Activated T-helper 2 cell treated with anti-CD3 and anti-CD28 coated beads, Interferon-gamma antibody, Interleukin-2, Interleukin-4, amounts not matched to agents 10 μg/mL and 5 μg/mL and 100 μg/mL, durations not matched to agents 14 hours and 24 hours and 36 hours (primary cell): ENCODE measurements at regions of chr1 and their contacts with region 1.

Region 1: DNA sequence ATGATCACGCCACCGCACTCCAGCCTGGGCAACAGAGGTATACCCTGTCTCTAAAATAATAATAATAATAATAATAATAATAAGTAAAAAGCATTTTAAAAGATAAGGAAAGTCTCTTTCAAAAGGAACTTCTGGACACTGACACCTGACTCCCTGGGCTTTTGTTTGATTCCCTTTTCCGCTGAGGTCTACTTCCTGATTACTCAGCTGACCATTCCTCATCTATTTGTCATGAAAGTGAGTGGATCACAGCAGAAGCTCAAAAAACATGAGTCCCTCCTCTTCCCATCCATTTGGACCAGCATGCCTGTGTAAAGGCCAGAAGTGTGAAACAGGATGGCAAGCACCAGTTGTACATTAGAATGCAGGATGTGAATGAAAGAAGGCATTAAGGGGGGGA is 61.1 kb upstream of the FBXO28 start:
- DNase-seq: no peak
- H3K4me3 Mint-ChIP-seq: no peak overlapping the region
- H3K27ac Mint-ChIP-seq: no peak overlapping the region
- H3K4me1 Mint-ChIP-seq: peaks cover 1% of the 10 kb centered on the region
- H3K27me3 Mint-ChIP-seq: peaks cover 23% of the 10 kb centered on the region

Region 2: DNA sequence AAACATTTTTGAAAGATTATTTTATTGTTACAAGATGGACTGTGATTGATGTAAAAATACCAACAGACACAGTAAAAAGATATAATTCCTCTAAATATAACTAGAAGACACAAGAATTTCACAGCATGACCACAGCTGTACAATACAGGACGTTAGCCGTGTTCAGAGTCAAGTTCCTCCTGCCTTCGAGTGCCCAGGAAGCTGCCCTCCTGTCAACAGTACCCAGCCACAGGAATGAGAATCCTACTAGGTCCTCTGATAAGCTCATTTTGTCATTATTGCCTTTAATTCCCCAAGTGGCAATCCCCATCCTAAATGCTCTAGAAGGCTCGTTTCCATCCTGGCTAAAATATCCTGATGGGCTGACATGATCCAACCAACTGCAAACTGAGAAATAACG is 356.8 kb before region 1 on chr1:
- intact Hi-C with region 1: loop called (anchors 5 kb)
- DNase-seq: no peak
- H3K4me3 Mint-ChIP-seq: no peak overlapping the region
- H3K27ac Mint-ChIP-seq: no peak overlapping the region
- H3K4me1 Mint-ChIP-seq: peaks cover 16% of the 10 kb centered on the region
- H3K27me3 Mint-ChIP-seq: peaks cover 2% of the 10 kb centered on the region

Region 3: DNA sequence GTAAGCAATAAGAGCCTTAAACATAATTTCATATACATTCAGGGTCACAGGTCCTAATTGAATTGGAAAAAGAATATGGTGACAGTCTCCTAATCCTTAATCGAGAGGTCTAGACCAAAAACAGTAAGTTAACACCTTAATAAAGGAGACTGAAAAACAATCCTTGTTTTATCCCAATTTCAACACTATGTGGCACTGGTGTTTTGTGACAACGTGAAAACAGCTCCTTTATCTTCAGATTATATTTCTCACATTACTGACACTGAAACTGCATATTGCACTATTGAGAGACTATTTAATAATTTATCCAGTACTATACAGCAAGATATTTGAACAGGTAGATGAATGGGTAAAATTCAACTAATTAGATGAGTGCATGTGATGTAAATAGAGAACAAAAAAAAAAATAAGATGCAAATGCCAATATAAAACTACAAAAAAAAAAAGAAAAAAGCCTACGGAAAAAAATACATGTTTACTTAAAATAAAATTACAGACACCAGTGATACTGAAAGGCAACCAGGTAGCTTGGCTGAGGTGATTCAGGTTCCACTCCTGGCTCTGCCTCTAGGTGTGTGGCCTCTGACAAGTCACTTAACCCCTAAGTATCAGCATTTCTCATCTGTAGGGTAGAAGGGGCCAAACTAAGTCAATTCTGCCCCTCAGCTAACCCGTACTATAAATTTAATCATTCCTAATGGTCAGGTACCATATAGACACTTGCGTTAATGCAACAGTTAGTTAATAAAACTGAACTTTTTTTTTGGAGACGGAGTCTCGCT is 240.9 kb before region 1 on chr1:
- intact Hi-C with region 1: loop called (anchors 5 kb)
- DNase-seq: no peak
- H3K4me3 Mint-ChIP-seq: no peak overlapping the region
- H3K27ac Mint-ChIP-seq: no peak overlapping the region
- H3K4me1 Mint-ChIP-seq: peaks cover 18% of the 10 kb centered on the region
- H3K27me3 Mint-ChIP-seq: no peaks in the 10 kb centered on the region